ENCODE measurements at regions of chr3 and their contacts with region 1.

Region 1: DNA sequence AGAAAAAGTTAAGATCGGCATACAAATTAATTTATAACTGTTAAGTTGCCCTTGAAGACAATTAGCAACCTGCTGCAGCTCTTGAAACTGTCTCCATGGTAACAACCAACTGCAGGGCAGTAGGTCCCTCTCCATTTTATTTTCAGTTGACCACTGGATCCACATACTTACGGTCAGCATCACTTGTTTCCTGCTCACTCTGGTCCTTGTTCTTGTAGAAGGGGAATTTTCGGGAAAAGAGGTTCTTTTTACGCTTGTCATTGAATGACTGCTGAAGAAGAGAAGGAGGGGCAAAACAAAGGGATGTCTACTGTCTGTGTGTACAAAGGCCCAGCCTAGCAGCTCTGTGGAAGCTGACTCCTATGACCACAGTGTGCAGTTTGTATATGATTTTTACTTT is 46.8 kb upstream of the MELTF start:
- DNase-seq: no peak
- H3K4me3 Mint-ChIP-seq: no peak overlapping the region
- H3K27ac Mint-ChIP-seq: no peak overlapping the region
- H3K4me1 Mint-ChIP-seq: no peaks in the 10 kb centered on the region
- H3K27me3 Mint-ChIP-seq: no peaks in the 10 kb centered on the region

Region 2: GRCh38 chr3:196988241-196989029 is 88.0 kb before region 1 on chr3:
- CTCF ChIA-PET with region 1: no interaction called
- intact Hi-C with region 1: no loop called
- DNase-seq: no peak
- H3K4me3 Mint-ChIP-seq: no peak overlapping the region
- H3K27ac Mint-ChIP-seq: no peak overlapping the region
- H3K4me1 Mint-ChIP-seq: no peaks in the 10 kb centered on the region
- H3K27me3 Mint-ChIP-seq: peaks cover 3% of the 10 kb centered on the region

Region 3: DNA sequence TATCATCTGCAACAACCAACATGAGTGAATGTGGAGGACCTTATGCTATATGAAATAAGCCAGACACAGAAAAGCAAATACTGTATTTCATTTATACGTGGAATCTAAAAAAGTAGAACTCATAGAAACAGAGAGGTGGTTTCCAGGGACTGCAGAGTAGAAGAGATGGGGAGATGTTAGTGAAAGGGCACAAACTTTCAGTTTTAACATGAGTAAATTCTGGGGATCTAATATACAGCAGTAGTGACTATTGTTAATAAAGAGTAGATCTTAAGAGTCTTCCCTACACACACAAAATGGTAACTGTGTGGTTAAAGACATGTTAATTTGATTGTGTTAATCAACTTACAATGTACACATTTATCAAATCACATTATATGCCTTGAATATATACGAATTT is 25.9 kb before region 1 on chr3:
- CTCF ChIA-PET with region 1: no interaction called
- intact Hi-C with region 1: loop called (anchors 2 kb)
- DNase-seq: no peak
- H3K4me3 Mint-ChIP-seq: no peak overlapping the region
- H3K27ac Mint-ChIP-seq: no peak overlapping the region
- H3K4me1 Mint-ChIP-seq: peaks cover 16% of the 10 kb centered on the region
- H3K27me3 Mint-ChIP-seq: no peaks in the 10 kb centered on the region